SK-N-SH (cell line): ENCODE measurements at regions of chr1 and their contacts with region 1.

Region 1: DNA sequence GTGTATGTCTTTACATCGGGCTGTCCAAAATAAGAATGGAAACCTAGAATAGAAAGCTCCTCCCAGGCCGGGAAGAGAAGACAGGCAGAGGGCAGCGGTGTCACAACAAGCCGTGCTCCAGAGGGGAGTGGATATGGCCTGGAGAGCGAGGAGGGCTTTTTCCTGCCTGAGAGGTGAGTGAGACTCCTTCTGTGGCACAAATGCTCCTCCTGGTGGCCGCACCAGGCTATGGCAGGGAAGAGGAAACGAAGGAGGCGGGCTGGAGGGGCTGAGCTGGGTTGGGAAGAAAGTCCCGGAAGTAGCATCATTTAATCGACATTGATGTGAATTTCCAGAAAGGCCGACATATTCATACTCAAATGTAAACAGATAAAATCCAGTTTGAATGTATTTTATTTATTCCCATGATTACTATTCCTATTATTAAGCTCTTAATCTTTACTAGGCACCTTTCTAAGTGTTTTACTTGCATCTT is 54.7 kb downstream of the MEF2D start:
- DNase-seq: peak; percentile 87
- H3K4me3 ChIP-seq: peak overlapping the region in 1 of 2 experiments; percentile 36; a peak in 1 of 4 replicates
- H3K27ac ChIP-seq: no peak overlapping the region
- H3K4me1 ChIP-seq: no peaks in the 10 kb centered on the region; a peak in 1 of 4 replicates
- H3K27me3 ChIP-seq: 0 out of 2 replicates have a peak, but pooled peaks cover 10% of the 10 kb centered on the region
- CTCF ChIP-seq: peak; percentile 96
- EP300 ChIP-seq: no peak
- RAD21 ChIP-seq: peak; percentile 95

Region 2: DNA sequence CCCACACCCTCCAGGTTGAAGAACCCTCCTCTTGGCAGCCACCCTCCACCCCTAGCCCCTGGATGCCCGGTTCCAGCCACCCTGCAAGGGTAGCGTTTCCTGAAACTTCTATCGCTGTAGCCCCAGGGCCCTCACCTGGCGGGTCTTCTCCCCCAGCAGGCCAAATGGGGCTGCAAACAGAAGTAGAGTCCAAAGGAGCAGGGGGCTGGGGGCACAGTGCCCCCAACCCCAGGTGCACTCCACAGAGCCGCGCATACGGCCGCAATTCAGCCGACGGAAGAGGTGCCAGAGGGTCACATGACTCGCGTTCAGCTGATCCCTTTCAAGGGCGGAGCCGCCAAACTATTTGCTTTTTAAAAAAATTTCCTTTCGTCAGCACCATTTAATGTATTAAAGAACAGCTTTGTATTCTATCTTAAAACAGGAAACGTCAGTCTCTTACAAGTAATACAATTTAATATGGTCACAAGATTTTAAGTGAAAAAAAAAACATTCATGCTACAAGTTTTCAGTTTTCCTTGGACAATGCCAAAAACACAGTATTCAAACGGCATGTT is 150.4 kb before region 1 on chr1 and contains the start of gene GLMP:
- CTCF ChIA-PET with region 1: no interaction called
- POLR2A ChIA-PET with region 1: no interaction called
- DNase-seq: peak; percentile 82
- H3K4me3 ChIP-seq: peak within 1 kb of the TSS; percentile 77 to 89
- H3K27ac ChIP-seq: peak within 1 kb of the TSS; percentile 16 to 51; a peak in 3 of 4 replicates
- H3K4me1 ChIP-seq: peaks cover 9 to 11% of the 10 kb centered on the region in 2 experiments; a peak in 2 of 4 replicates
- H3K27me3 ChIP-seq: no peaks in the 10 kb centered on the region
- CTCF ChIP-seq: no peak
- EP300 ChIP-seq: peak in 1 of 2 experiments; percentile 15; a peak in 1 of 4 replicates
- RAD21 ChIP-seq: no peak
- polyA plus RNA-seq, gene GLMP: 40.5 and 41.7 TPM in 2 replicates

Region 3: DNA sequence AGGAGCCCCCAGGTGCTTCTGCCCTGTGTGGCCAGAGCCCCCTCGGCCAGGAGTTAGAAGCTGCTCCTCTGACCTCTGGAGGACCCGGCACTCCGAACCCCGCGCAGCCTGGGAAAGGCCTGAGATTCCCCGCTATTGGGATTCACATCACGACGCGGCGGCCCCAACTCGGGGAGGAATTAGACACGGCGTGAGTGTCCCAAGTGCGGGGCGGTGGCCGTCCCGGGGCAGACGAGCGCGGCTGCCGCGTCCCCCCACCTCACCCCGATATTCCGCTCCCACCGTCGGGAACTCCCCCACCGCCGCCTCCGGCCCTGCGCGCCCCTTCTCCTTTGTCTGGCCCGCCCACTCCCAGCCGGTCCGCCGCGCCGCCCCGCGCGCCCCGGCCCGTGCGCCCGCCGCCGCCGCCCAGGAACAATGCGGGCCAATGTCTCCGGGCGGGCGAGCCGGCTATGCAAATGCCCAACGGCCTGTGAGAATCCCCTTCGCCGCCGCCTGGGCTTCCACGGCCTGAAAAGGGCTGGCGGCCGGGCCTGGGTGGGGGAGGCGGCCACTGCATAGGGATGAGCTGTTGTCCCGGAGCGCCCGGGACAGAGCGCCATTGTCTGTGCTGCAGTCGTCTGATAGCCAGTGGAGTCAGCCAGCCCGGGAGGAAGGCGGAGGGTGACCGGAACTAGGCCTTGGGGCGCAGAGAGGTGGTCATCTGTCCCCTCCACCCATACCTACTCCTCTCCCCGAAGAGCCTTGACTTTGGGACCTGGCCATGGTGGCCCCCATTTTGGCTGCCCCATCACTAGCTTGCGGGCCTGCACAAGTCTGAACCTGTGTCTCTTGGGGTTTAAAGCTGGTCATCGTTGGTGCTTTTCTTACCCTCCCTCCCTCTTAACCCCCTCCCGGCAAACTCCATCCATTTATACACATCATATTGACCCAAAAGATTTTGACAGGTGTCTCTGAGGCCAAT is 57.4 kb before region 1 on chr1:
- CTCF ChIA-PET with region 1: interaction called, 391 read pairs
- POLR2A ChIA-PET with region 1: no interaction called
- DNase-seq: no peak
- H3K4me3 ChIP-seq: no peak overlapping the region
- H3K27ac ChIP-seq: no peak overlapping the region
- H3K4me1 ChIP-seq: peaks cover 0 to 9% of the 10 kb centered on the region in 2 experiments; a peak in 1 of 4 replicates
- H3K27me3 ChIP-seq: no peaks in the 10 kb centered on the region; the same call in 1 of the 2 replicates
- CTCF ChIP-seq: no peak
- EP300 ChIP-seq: no peak
- RAD21 ChIP-seq: no peak

Region 4: GRCh38 chr1:156407344-156407743 is 38.5 kb before region 1 on chr1:
- CTCF ChIA-PET with region 1: interaction called, 25 read pairs
- POLR2A ChIA-PET with region 1: no interaction called
- DNase-seq: peak; percentile 59
- H3K4me3 ChIP-seq: no peak overlapping the region
- H3K27ac ChIP-seq: no peak overlapping the region
- H3K4me1 ChIP-seq: no peaks in the 10 kb centered on the region
- H3K27me3 ChIP-seq: peaks cover 14% of the 10 kb centered on the region; the same call in 1 of the 2 replicates
- CTCF ChIP-seq: no peak
- EP300 ChIP-seq: no peak
- RAD21 ChIP-seq: no peak

Region 5: DNA sequence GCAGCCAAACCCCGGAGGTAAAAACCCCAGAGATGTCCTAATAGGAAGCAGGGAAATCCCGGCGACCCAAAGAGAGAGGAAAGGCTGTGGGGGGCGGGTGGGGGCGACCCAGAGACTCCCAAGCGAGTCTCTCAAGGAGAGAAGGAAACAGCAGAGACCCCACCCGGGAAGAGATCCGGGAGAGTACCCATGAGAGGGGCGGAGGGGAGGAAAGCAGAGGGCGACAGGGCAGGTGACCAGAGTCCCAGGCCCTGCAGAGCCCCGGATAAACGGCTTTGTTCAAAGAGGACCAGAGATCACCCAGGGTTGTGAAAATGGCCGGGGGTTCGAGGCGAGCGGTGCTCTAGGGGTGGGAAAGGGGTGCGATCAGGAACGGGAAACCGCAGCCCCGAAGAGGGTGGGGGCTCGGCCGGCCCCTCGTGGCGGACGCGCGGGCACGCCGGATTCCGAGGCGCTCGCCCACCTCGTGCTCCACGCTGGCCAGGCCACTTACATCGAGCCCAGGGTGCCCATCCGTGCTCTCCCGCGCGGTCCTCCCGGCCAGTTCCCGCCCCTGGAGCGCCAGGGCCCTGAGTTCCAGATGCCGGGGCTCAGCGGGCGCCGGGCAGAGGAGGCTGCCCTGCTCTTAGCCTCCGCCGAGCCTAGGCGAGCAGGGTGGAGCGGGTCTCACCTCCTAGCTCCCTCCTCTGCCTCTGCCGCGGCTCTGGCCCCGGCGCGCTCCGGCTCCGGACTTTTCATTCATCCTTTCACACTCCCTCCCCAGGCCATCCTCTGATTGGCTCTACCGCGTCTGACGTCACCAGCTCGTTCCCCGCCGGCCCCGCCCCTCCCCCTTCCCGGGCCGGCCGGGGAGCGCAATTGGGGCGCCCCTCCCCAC is 24.5 kb before region 1 on chr1:
- CTCF ChIA-PET with region 1: interaction called, 46 read pairs
- POLR2A ChIA-PET with region 1: interaction called, 3 read pairs
- DNase-seq: peak; percentile 98
- H3K4me3 ChIP-seq: peak overlapping the region; percentile 10 to 48; a peak in 3 of 4 replicates
- H3K27ac ChIP-seq: peak overlapping the region in 1 of 2 experiments; percentile 34; a peak in 1 of 4 replicates
- H3K4me1 ChIP-seq: peaks cover 11 to 28% of the 10 kb centered on the region in 2 experiments; a peak in 3 of 4 replicates
- H3K27me3 ChIP-seq: peaks cover 53% of the 10 kb centered on the region
- CTCF ChIP-seq: no peak
- EP300 ChIP-seq: no peak
- RAD21 ChIP-seq: no peak

Region 6: DNA sequence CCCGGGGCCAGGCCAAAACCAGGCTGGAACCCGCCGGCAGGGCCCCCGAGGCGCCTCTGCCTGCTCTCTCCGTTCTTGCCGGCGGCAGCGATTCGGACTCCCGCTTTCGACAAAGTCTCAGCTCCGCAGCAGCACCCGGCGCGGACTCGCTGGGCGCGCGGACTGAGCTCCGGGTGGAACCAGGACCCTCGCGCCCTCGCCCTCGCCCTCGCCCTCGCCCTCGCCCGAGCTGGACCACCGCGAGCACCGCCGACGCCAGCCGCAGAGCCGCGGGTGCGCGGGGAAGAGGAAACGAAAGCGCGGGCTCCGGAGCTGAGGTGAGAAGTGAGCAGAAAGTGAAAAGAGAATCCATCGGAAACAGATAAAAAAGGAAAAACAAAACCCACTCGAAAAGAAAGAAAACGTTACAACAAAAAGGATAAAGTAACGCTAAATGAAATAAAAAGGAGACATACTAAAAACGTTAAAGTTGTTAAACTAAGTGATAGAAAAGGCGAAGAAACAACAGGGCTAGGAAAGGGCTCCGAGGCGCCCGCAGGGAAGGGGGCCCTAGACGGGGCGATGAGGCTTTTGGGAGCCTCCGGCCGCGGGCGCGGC is 10.2 kb before region 1 on chr1:
- CTCF ChIA-PET with region 1: interaction called, 47 read pairs
- POLR2A ChIA-PET with region 1: interaction called, 4 read pairs
- DNase-seq: no peak
- H3K4me3 ChIP-seq: peak overlapping the region in 1 of 2 experiments; percentile 29; a peak in 2 of 4 replicates
- H3K27ac ChIP-seq: no peak overlapping the region
- H3K4me1 ChIP-seq: no peaks in the 10 kb centered on the region; a peak in 1 of 4 replicates
- H3K27me3 ChIP-seq: peaks cover 66% of the 10 kb centered on the region
- CTCF ChIP-seq: no peak
- EP300 ChIP-seq: no peak
- RAD21 ChIP-seq: no peak

Region 7: GRCh38 chr1:156572663-156573018 is 126.8 kb after region 1 on chr1:
- CTCF ChIA-PET with region 1: no interaction called
- POLR2A ChIA-PET with region 1: no interaction called
- DNase-seq: no peak
- H3K4me3 ChIP-seq: peak overlapping the region; percentile 67 to 72
- H3K27ac ChIP-seq: no peak overlapping the region
- H3K4me1 ChIP-seq: peaks cover 7 to 15% of the 10 kb centered on the region in 2 experiments; a peak in 3 of 4 replicates
- H3K27me3 ChIP-seq: no peaks in the 10 kb centered on the region
- CTCF ChIP-seq: no peak
- EP300 ChIP-seq: no peak
- RAD21 ChIP-seq: no peak